IMR-90 (cell line): ENCODE measurements at regions of chr7 and their contacts with region 1.

Region 1: GRCh38 chr7:54242776-54243175 is 299.4 kb upstream of the VSTM2A start:
- DNase-seq: no peak
- ATAC-seq: no peak
- H3K4me3 ChIP-seq: no peak overlapping the region
- H3K27ac ChIP-seq: no peak overlapping the region
- H3K4me1 ChIP-seq: no peaks in the 10 kb centered on the region
- H3K27me3 ChIP-seq: no peaks in the 10 kb centered on the region
- CTCF ChIP-seq: no peak
- POLR2A ChIP-seq: no peak
- RAD21 ChIP-seq: no peak

Region 2: DNA sequence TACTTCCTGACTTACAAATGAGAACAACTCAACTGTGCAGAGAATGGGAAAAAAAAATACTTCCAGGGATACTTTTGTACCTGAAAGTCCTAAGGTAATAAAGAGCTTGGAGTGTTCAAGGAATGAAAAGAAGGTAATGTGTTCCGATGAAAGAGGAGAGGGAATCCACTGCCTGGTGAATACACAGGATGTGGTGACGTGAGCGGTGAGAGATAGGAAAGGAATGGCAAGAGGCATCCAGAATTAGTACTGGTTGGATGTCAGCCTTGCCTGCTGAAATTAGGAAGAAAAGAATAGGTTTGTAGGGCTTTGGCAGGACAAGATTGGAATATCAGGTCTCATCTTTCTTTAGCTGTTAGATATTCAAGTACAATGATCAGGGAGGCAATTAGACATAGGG is 859.6 kb before region 1 on chr7:
- CTCF ChIA-PET with region 1: no interaction called
- POLR2A ChIA-PET with region 1: no interaction called
- dilution Hi-C with region 1: no loop called
- in situ Hi-C with region 1: no loop called
- intact Hi-C with region 1: no loop called
- DNase-seq: no peak
- ATAC-seq: no peak
- H3K4me3 ChIP-seq: no peak overlapping the region
- H3K27ac ChIP-seq: no peak overlapping the region
- H3K4me1 ChIP-seq: no peaks in the 10 kb centered on the region
- H3K27me3 ChIP-seq: no peaks in the 10 kb centered on the region
- CTCF ChIP-seq: no peak
- POLR2A ChIP-seq: no peak
- RAD21 ChIP-seq: no peak

Region 3: DNA sequence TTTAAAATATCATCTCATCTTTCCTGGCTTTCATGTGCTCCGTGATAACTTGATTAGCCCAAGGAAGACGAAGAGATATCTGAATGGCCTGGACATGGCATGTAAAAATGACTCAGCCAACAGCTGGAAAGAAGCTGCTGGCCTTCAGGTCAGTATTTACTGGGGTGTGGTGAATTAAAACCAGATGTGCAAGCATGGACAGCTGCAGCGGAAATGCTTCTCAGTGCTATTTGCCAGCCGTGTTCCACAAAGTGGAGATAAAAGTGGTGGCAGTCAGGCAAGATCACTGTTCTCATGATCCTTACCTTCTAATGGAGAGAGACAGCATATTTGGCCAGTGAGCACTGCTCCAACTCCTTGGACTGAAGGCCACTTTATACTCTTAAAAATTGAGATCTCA is 96.3 kb after region 1 on chr7:
- CTCF ChIA-PET with region 1: no interaction called
- POLR2A ChIA-PET with region 1: no interaction called
- dilution Hi-C with region 1: no loop called
- in situ Hi-C with region 1: loop called (anchors 10 kb)
- intact Hi-C with region 1: loop called (anchors 10 kb)
- DNase-seq: no peak
- ATAC-seq: no peak
- H3K4me3 ChIP-seq: no peak overlapping the region
- H3K27ac ChIP-seq: no peak overlapping the region
- H3K4me1 ChIP-seq: no peaks in the 10 kb centered on the region
- H3K27me3 ChIP-seq: no peaks in the 10 kb centered on the region
- CTCF ChIP-seq: no peak
- POLR2A ChIP-seq: no peak
- RAD21 ChIP-seq: no peak

Region 4: DNA sequence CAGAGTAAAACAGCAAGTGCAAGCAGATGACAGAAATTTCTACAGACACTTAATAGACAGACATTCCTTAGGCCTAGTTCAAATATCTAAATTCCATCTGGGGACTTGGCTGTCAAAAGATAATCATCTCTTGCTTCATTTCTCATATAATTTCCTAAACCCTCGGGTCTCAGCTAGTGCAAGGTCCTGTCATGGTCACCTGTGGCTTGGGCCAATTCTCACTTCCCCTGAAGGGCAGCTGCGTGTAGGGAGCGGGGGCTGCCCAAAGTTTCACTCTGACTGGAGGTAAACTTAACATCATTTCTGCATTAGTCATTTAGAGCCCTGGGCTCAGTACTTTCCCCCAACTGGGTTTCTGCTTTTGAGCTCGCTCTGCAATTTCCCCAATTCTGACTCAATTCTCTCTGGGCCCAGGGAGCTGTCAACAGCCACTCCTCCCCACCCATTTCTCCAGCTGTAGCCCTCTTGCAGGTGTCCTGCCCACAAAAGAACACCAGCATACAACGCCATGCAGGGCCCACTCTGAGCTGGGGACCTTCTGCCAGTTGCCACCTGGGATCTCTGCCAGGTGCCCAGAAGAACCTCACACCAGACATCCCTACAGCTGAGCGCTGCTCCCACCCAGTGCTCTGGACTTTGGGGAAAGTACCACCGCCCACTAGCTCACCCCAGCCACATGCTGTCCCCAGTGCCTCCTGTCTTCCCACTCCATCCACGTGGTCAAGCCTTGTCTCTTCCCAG is 1291.6 kb after region 1 on chr7:
- CTCF ChIA-PET with region 1: no interaction called
- POLR2A ChIA-PET with region 1: no interaction called
- dilution Hi-C with region 1: no loop called
- in situ Hi-C with region 1: no loop called
- intact Hi-C with region 1: no loop called
- DNase-seq: peak; percentile 81
- ATAC-seq: peak; percentile 62
- H3K4me3 ChIP-seq: no peak overlapping the region
- H3K27ac ChIP-seq: no peak overlapping the region
- H3K4me1 ChIP-seq: peaks cover 33% of the 10 kb centered on the region
- H3K27me3 ChIP-seq: no peaks in the 10 kb centered on the region
- CTCF ChIP-seq: no peak
- POLR2A ChIP-seq: no peak
- RAD21 ChIP-seq: no peak; the same call in 1 of the 2 replicates